ENCODE measurements at regions of chr18 and their contacts with region 1.

Region 1: GRCh38 chr18:7789856-7790552 is 222.9 kb downstream of the PTPRM start:
- DNase-seq: peak; percentile 27
- ATAC-seq: peak; percentile 92
- H3K4me3 Mint-ChIP-seq: peak overlapping the region; percentile 28
- H3K27ac Mint-ChIP-seq: peak overlapping the region; percentile 97
- H3K4me1 Mint-ChIP-seq: peaks cover 13% of the 10 kb centered on the region
- H3K27me3 Mint-ChIP-seq: no peaks in the 10 kb centered on the region
- CTCF ChIP-seq: peak; percentile 42

Region 2: GRCh38 chr18:7566567-7567473 is 223.2 kb before region 1 on chr18 and contains the start of gene PTPRM:
- CTCF ChIA-PET with region 1: interaction called, 14 read pairs
- POLR2A ChIA-PET with region 1: no interaction called
- DNase-seq: peak; percentile 67
- ATAC-seq: peak; percentile 81
- H3K4me3 Mint-ChIP-seq: peak within 1 kb of the TSS; percentile 71
- H3K27ac Mint-ChIP-seq: no peak within 1 kb of the TSS
- H3K4me1 Mint-ChIP-seq: peaks cover 14% of the 10 kb centered on the region
- H3K27me3 Mint-ChIP-seq: peaks cover 41% of the 10 kb centered on the region
- CTCF ChIP-seq: peak; percentile 18; the same call in 1 of the 2 replicates
- total RNA-seq, gene PTPRM: 8.6 to 11.1 TPM (median 9.2 TPM) in 3 replicates

Region 3: DNA sequence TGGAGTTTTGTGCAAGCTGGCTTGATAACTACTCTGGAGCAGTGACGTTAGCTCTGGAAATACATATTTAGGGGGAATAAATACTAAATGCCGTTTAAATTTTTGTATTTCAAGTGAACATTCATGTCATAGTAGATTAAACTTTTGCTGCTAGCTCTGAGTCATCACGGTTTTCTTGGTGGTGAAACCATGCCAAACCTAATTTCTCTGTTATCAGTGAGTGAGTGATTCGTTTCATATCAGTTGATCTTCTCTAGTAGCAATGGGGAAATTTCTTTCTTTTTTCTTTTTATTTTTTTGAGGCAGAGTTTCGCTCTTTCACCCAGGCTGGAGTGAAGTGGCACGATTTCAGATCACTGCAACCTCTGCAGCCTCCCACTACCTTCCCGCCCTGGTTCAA is 11.8 kb before region 1 on chr18:
- CTCF ChIA-PET with region 1: interaction called, 11 read pairs
- POLR2A ChIA-PET with region 1: no interaction called
- DNase-seq: no peak
- ATAC-seq: no peak
- H3K4me3 Mint-ChIP-seq: no peak overlapping the region
- H3K27ac Mint-ChIP-seq: no peak overlapping the region
- H3K4me1 Mint-ChIP-seq: 0 out of 2 replicates have a peak, but pooled peaks cover 3% of the 10 kb centered on the region
- H3K27me3 Mint-ChIP-seq: no peaks in the 10 kb centered on the region
- CTCF ChIP-seq: no peak

Region 4: GRCh38 chr18:7808992-7809391 is 19.0 kb after region 1 on chr18:
- CTCF ChIA-PET with region 1: interaction called, 13 read pairs
- POLR2A ChIA-PET with region 1: no interaction called
- DNase-seq: no peak
- ATAC-seq: peak; percentile 67
- H3K4me3 Mint-ChIP-seq: no peak overlapping the region
- H3K27ac Mint-ChIP-seq: no peak overlapping the region
- H3K4me1 Mint-ChIP-seq: peaks cover 25% of the 10 kb centered on the region
- H3K27me3 Mint-ChIP-seq: no peaks in the 10 kb centered on the region; the same call in 1 of the 2 replicates
- CTCF ChIP-seq: no peak

Region 5: GRCh38 chr18:7856733-7857132 is 66.7 kb after region 1 on chr18:
- CTCF ChIA-PET with region 1: interaction called, 12 read pairs
- POLR2A ChIA-PET with region 1: no interaction called
- DNase-seq: no peak
- ATAC-seq: no peak
- H3K4me3 Mint-ChIP-seq: no peak overlapping the region
- H3K27ac Mint-ChIP-seq: no peak overlapping the region
- H3K4me1 Mint-ChIP-seq: peaks cover 5% of the 10 kb centered on the region
- H3K27me3 Mint-ChIP-seq: no peaks in the 10 kb centered on the region
- CTCF ChIP-seq: no peak

Region 6: DNA sequence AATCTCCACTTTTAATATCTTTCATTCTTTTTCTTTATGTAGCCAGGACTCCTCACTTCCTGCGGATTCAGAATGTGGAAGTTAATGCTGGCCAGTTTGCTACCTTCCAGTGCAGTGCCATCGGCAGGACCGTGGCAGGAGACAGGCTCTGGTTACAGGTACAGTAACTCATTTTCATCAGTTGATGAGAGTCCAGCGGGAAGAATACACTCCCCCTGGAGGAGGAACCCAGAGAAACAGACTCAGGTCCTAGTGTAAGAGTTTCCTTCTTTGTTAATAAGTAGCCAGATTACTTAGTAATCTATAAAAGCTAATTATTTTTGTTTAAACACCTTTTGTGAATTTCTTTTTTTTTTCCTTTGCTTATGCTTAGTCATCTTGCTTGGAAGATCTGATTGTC is 136.5 kb after region 1 on chr18:
- CTCF ChIA-PET with region 1: interaction called, 16 read pairs
- POLR2A ChIA-PET with region 1: interaction called, 3 read pairs
- DNase-seq: no peak
- ATAC-seq: peak; percentile 82
- H3K4me3 Mint-ChIP-seq: no peak overlapping the region
- H3K27ac Mint-ChIP-seq: no peak overlapping the region
- H3K4me1 Mint-ChIP-seq: peaks cover 4% of the 10 kb centered on the region
- H3K27me3 Mint-ChIP-seq: no peaks in the 10 kb centered on the region
- CTCF ChIP-seq: no peak

Measured in WTC11 (cell line).